Heart right ventricle (tissue), 16 donors: ENCODE measurements at regions of chr17 and their contacts with region 1.

Region 1: GRCh38 chr17:16415031-16415924 is at the start of gene TRPV2:
- DNase-seq: peak in 1 of 2 donors; percentile 58
- ATAC-seq: peak; percentile 32 to 82 (median 68)
- H3K4me3 ChIP-seq: peak within 1 kb of the TSS; percentile 39 to 79 (median 66)
- H3K27ac ChIP-seq: peak within 1 kb of the TSS; percentile 78 to 97 (median 92)
- H3K4me1 ChIP-seq: peaks cover 0 to 49% (median 31%) of the 10 kb centered on the region in 9 donors
- H3K27me3 ChIP-seq: no peaks in the 10 kb centered on the region
- CTCF ChIP-seq: peak in 7 of 9 donors; percentile 24 to 49 (median 34)
- total RNA-seq, gene TRPV2: 4.6 to 25.4 (median 8.6) TPM

Region 2: DNA sequence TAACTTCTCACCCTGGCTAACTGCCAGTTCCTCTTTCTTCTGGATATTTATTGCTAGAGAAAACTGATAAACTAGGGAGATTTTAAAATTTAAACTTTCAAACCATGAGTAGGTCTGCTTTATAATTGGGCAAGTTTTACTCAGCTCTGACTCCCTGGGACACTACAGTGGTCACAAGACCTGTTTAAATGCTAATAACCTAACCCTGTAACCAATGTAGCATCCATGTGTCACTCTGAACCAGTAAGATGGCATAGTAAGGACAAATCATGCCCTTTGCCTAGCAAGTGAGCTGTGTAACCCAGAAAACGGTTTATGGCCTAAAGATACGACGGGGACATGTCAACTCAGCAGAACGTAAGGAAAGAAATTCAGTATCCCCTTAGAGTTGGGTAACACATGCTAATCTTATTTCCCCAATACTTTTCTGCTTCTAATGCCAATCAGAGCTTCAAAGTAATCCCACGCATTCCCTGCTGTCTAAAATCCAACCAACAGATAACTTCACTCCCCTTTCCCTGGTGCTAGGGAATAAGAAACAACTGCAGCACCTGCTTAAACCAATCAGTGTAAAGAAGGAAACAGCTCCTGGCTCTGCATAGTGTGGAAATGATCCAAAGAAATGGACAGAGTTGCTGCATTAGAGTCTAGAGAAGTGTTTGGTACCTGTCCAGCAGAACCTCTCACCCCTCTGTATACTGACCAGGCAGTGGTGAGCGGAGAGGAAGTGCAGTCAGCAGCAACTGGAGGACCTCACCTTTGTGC is 285.7 kb before region 1 on chr17:
- intact Hi-C with region 1: no loop called
- DNase-seq: no peak
- ATAC-seq: no peak
- H3K4me3 ChIP-seq: no peak overlapping the region
- H3K27ac ChIP-seq: no peak overlapping the region
- H3K4me1 ChIP-seq: no peaks in the 10 kb centered on the region
- H3K27me3 ChIP-seq: no peaks in the 10 kb centered on the region
- CTCF ChIP-seq: no peak

Region 3: GRCh38 chr17:16363749-16364536 is 51.3 kb before region 1 on chr17:
- intact Hi-C with region 1: loop called in 1 of 10 experiments (anchors 10 kb)
- DNase-seq: peak; percentile 63 to 68
- ATAC-seq: peak; percentile 55 to 90 (median 84)
- H3K4me3 ChIP-seq: no peak overlapping the region
- H3K27ac ChIP-seq: no peak overlapping the region
- H3K4me1 ChIP-seq: peaks cover 0 to 7% (median 0%) of the 10 kb centered on the region in 9 donors
- H3K27me3 ChIP-seq: peaks cover 0 to 11% (median 0%) of the 10 kb centered on the region in 7 donors
- CTCF ChIP-seq: peak; percentile 90 to 96 (median 93)

Region 4: GRCh38 chr17:16496820-16497489 is 81.7 kb after region 1 on chr17:
- intact Hi-C with region 1: no loop called
- DNase-seq: no peak
- ATAC-seq: no peak
- H3K4me3 ChIP-seq: no peak overlapping the region
- H3K27ac ChIP-seq: no peak overlapping the region
- H3K4me1 ChIP-seq: peaks cover 0 to 5% (median 0%) of the 10 kb centered on the region in 9 donors
- H3K27me3 ChIP-seq: peaks cover 0 to 9% (median 0%) of the 10 kb centered on the region in 7 donors
- CTCF ChIP-seq: no peak